Calu3 (cell line): ENCODE measurements at regions of chr1 and their contacts with region 1.

Region 1: GRCh38 chr1:157369808-157370521 is 182.3 kb downstream of the FCRL5 start:
- DNase-seq: peak; percentile 74
- H3K4me3 Mint-ChIP-seq: no peak overlapping the region
- H3K27ac Mint-ChIP-seq: no peak overlapping the region
- H3K4me1 Mint-ChIP-seq: no peaks in the 10 kb centered on the region
- H3K27me3 Mint-ChIP-seq: peaks cover 11% of the 10 kb centered on the region
- CTCF ChIP-seq: peak; percentile 91

Region 2: GRCh38 chr1:157199421-157199755 is 170.6 kb before region 1 on chr1:
- CTCF ChIA-PET with region 1: no interaction called
- intact Hi-C with region 1: loop called (anchors 2 kb)
- DNase-seq: no peak
- H3K4me3 Mint-ChIP-seq: no peak overlapping the region
- H3K27ac Mint-ChIP-seq: no peak overlapping the region
- H3K4me1 Mint-ChIP-seq: peaks cover 12% of the 10 kb centered on the region
- H3K27me3 Mint-ChIP-seq: peaks cover 15% of the 10 kb centered on the region
- CTCF ChIP-seq: no peak

Region 3: DNA sequence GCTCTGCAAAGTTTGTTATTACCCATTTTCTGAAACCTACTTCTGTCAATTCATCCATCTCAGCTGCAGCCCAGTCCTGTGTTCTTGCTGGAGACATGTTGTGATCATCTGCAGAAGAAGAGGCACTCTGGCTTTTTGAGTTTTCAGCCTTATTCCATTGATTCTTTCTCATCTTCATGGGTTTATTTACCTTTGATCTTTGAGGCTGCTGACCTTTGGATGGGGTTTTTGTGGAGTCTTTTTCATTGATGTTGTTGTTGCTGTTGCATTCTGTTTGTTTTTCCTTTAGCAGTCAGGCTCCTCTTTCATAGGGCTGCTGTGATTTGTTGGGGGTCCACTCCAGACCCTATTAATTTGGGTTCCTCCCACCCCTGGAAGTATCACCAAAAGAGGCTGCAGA is 18.1 kb after region 1 on chr1:
- CTCF ChIA-PET with region 1: no interaction called
- intact Hi-C with region 1: no loop called
- DNase-seq: no peak
- H3K4me3 Mint-ChIP-seq: no peak overlapping the region
- H3K27ac Mint-ChIP-seq: no peak overlapping the region
- H3K4me1 Mint-ChIP-seq: no peaks in the 10 kb centered on the region
- H3K27me3 Mint-ChIP-seq: peaks cover 93% of the 10 kb centered on the region
- CTCF ChIP-seq: no peak

Region 4: GRCh38 chr1:157419845-157420542 is 50.0 kb after region 1 on chr1:
- CTCF ChIA-PET with region 1: no interaction called
- intact Hi-C with region 1: loop called (anchors 2 kb)
- DNase-seq: no peak
- H3K4me3 Mint-ChIP-seq: no peak overlapping the region
- H3K27ac Mint-ChIP-seq: no peak overlapping the region
- H3K4me1 Mint-ChIP-seq: no peaks in the 10 kb centered on the region
- H3K27me3 Mint-ChIP-seq: peaks cover 2% of the 10 kb centered on the region
- CTCF ChIP-seq: no peak

Region 5: DNA sequence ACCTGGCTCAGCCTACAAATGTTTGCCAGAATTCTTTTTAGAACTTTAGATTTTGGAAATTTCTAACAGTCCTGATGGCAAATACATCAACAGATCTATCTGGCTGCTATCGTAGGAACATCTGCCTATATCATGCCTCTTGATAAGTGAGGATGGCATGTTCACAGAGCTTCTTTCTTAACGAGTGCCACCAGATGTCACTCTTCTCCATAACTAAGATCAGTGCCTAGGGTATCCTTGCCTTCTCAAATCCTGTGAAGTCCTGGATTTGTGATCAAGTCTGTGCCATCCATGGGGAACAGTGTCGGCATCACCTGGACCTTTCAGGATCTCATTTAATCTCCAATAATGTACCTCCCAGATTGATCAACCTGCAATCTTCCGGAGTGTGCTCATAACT is 508.1 kb after region 1 on chr1:
- CTCF ChIA-PET with region 1: no interaction called
- intact Hi-C with region 1: loop called (anchors 10 kb)
- DNase-seq: peak; percentile 44
- H3K4me3 Mint-ChIP-seq: no peak overlapping the region
- H3K27ac Mint-ChIP-seq: no peak overlapping the region
- H3K4me1 Mint-ChIP-seq: peaks cover 27% of the 10 kb centered on the region
- H3K27me3 Mint-ChIP-seq: no peaks in the 10 kb centered on the region
- CTCF ChIP-seq: peak; percentile 53

Region 6: GRCh38 chr1:157948312-157949073 is 578.5 kb after region 1 on chr1:
- CTCF ChIA-PET with region 1: no interaction called
- intact Hi-C with region 1: loop called (anchors 2 kb)
- DNase-seq: peak; percentile 61
- H3K4me3 Mint-ChIP-seq: no peak overlapping the region
- H3K27ac Mint-ChIP-seq: no peak overlapping the region
- H3K4me1 Mint-ChIP-seq: peaks cover 26% of the 10 kb centered on the region
- H3K27me3 Mint-ChIP-seq: peaks cover 28% of the 10 kb centered on the region
- CTCF ChIP-seq: peak; percentile 72